Calu3 (cell line): ENCODE measurements at regions of chr6 and their contacts with region 1.

Region 1: GRCh38 chr6:78324213-78324612 is 543.1 kb upstream of the IRAK1BP1 start:
- DNase-seq: no peak
- H3K4me3 Mint-ChIP-seq: no peak overlapping the region
- H3K27ac Mint-ChIP-seq: no peak overlapping the region
- H3K4me1 Mint-ChIP-seq: no peaks in the 10 kb centered on the region
- H3K27me3 Mint-ChIP-seq: no peaks in the 10 kb centered on the region
- CTCF ChIP-seq: no peak

Region 2: DNA sequence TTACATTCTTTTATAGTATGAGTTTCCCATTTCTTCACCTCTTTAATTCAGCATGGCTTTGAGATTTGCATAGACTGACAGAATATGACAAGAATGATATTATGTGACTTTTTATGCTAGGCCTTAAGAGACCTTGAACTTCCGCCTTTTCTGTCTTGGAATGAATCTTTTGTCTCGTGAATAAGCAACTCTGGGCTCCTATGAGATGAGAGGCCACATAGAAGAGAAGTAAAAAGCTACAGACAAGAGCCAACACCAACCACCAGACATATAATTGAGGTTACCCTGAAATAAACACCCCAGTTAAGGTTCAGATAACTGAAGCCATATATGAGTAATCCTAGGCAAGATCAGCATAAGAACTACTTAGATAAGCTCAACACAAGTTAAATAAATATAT is 70.6 kb before region 1 on chr6:
- CTCF ChIA-PET with region 1: no interaction called
- intact Hi-C with region 1: loop called (anchors 1 kb)
- DNase-seq: no peak
- H3K4me3 Mint-ChIP-seq: no peak overlapping the region
- H3K27ac Mint-ChIP-seq: no peak overlapping the region
- H3K4me1 Mint-ChIP-seq: no peaks in the 10 kb centered on the region
- H3K27me3 Mint-ChIP-seq: no peaks in the 10 kb centered on the region
- CTCF ChIP-seq: no peak